Body of pancreas (tissue), 4 donors: ENCODE measurements at regions of chrX and their contacts with region 1.

Region 1: GRCh38 chrX:119729408-119730201 is 28.8 kb upstream of the SOWAHD start:
- DNase-seq: peak; percentile 54 to 70 (median 60)
- ATAC-seq: peak; percentile 33
- H3K4me3 ChIP-seq: no peak overlapping the region
- H3K27ac ChIP-seq: no peak overlapping the region
- H3K4me1 ChIP-seq: no peaks in the 10 kb centered on the region
- H3K27me3 ChIP-seq: no peaks in the 10 kb centered on the region
- CTCF ChIP-seq: peak in 6 of 7 experiments; percentile 45 to 64 (median 58)
- POLR2A ChIP-seq: no peak

Region 2: GRCh38 chrX:119389214-119389613 is 340.4 kb before region 1 on chrX:
- intact Hi-C with region 1: no loop called
- DNase-seq: no peak
- ATAC-seq: no peak
- H3K4me3 ChIP-seq: no peak overlapping the region
- H3K27ac ChIP-seq: no peak overlapping the region
- H3K4me1 ChIP-seq: no peaks in the 10 kb centered on the region
- H3K27me3 ChIP-seq: no peaks in the 10 kb centered on the region
- CTCF ChIP-seq: no peak
- POLR2A ChIP-seq: no peak

Region 3: GRCh38 chrX:119529345-119530276 is 200.0 kb before region 1 on chrX:
- intact Hi-C with region 1: loop called (anchors 10 kb)
- DNase-seq: no peak
- ATAC-seq: no peak
- H3K4me3 ChIP-seq: no peak overlapping the region
- H3K27ac ChIP-seq: no peak overlapping the region
- H3K4me1 ChIP-seq: no peaks in the 10 kb centered on the region
- H3K27me3 ChIP-seq: no peaks in the 10 kb centered on the region
- CTCF ChIP-seq: no peak
- POLR2A ChIP-seq: no peak

Region 4: GRCh38 chrX:119617517-119618164 is 112.0 kb before region 1 on chrX:
- intact Hi-C with region 1: loop called (anchors 10 kb)
- DNase-seq: peak in 1 of 4 donors; percentile 6
- ATAC-seq: no peak
- H3K4me3 ChIP-seq: no peak overlapping the region
- H3K27ac ChIP-seq: no peak overlapping the region
- H3K4me1 ChIP-seq: no peaks in the 10 kb centered on the region
- H3K27me3 ChIP-seq: no peaks in the 10 kb centered on the region
- CTCF ChIP-seq: no peak
- POLR2A ChIP-seq: no peak